ENCODE measurements at regions of chr1 and their contacts with region 1.

Region 1: GRCh38 chr1:212608209-212608955 is at the start of gene ATF3:
- DNase-seq: peak; percentile 100
- H3K4me3 ChIP-seq: peak within 1 kb of the TSS; percentile 80 to 88 (median 81)
- H3K27ac ChIP-seq: peak within 1 kb of the TSS; percentile 97 to 99 (median 99)
- H3K4me1 ChIP-seq: peaks cover 0 to 54% (median 38%) of the 10 kb centered on the region in 4 donors
- H3K27me3 ChIP-seq: peaks cover 12 to 39% (median 34%) of the 10 kb centered on the region in 3 donors
- CTCF ChIP-seq: no peak
- EP300 ChIP-seq: peak; percentile 24 to 67 (median 40)
- POLR2A ChIP-seq: peak; percentile 98
- total RNA-seq, gene ATF3: 3.2 to 32.0 (median 11.8) TPM

Region 2: GRCh38 chr1:212469701-212470458 is 138.5 kb before region 1 on chr1:
- intact Hi-C with region 1: loop called (anchors 2 kb)
- DNase-seq: peak; percentile 97
- H3K4me3 ChIP-seq: peak overlapping the region in 1 of 4 donors; percentile 14
- H3K27ac ChIP-seq: peak overlapping the region; percentile 74 to 86 (median 85)
- H3K4me1 ChIP-seq: peaks cover 0 to 12% (median 8%) of the 10 kb centered on the region in 4 donors
- H3K27me3 ChIP-seq: no peaks in the 10 kb centered on the region
- CTCF ChIP-seq: no peak
- EP300 ChIP-seq: peak in 3 of 4 donors; percentile 34 to 97 (median 42)
- POLR2A ChIP-seq: no peak